Natural killer cell (primary cell): ENCODE measurements at regions of chr3 and their contacts with region 1.

Region 1: DNA sequence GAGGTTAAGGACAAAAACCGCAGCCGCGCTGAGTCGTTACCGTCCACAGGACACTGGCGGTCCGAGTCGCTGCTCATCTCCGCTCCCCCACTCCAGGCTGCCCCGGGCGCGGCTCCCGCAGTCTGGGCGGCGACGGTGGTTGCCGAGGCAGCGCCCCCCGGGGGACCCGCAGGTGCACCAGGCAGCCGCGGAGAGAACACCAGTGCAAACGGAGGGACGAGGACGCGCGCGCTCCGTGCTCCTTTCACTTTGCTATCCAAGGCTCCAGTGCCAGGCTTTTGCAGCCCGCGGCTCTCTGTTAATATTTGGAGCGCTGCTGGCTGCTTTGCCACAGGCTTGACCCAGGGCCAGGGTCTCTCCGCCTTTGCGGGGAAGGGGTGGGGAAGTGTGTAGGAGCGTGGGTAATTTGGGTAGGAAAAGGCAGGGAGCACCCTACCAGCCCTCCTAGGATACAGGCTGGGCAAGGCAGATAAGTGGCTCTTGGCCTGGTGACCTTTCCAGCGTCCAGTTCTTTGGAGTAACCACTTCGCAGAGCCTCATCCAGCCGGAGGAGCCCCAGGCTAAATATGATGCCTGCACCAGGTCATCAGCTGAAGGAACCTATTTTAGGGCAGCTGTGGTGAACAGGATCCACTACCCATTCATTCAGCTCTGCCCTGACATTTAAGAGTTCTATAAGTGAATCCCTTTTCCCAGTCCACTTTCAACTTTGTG is at the start of gene GADL1:
- DNase-seq: peak in 1 of 2 donors; percentile 6
- ATAC-seq: peak in 1 of 3 donors; percentile 58
- H3K4me3 ChIP-seq: no peak within 1 kb of the TSS
- H3K4me3 Mint-ChIP-seq: peak within 1 kb of the TSS; percentile 75
- H3K27ac ChIP-seq: no peak within 1 kb of the TSS
- H3K27ac Mint-ChIP-seq: no peak within 1 kb of the TSS
- H3K4me1 ChIP-seq: peaks cover 2% of the 10 kb centered on the region
- H3K4me1 Mint-ChIP-seq: peaks cover 9 to 15% of the 10 kb centered on the region in 2 donors
- H3K27me3 ChIP-seq: peaks cover 11% of the 10 kb centered on the region
- H3K27me3 Mint-ChIP-seq: peaks cover 25 to 34% of the 10 kb centered on the region in 2 donors
- CTCF ChIP-seq: no peak
- total RNA-seq, gene GADL1: not detected

Region 2: DNA sequence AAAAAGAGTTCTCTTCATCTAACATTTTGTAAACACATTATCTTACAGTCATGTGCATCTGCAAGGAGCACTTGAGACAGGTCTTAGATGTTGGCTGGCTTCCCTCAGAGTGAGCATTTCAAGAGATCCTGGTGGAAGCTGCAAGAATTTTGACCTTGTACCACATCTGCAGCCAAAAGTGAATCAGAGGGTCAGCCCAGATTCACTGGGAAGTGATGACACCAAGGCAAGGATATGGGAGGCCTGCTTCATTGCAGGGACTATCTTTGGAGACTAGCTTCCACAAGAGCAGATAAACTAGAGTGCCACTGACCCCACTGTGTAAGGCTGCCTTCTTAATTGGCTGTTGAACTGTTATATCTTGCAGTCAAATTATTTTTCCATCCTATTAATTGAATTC is 21.1 kb after region 1 on chr3:
- intact Hi-C with region 1: loop called (anchors 2 kb)
- DNase-seq: no peak
- ATAC-seq: no peak
- H3K4me3 ChIP-seq: no peak overlapping the region
- H3K4me3 Mint-ChIP-seq: no peak overlapping the region
- H3K27ac ChIP-seq: no peak overlapping the region
- H3K27ac Mint-ChIP-seq: no peak overlapping the region
- H3K4me1 ChIP-seq: no peaks in the 10 kb centered on the region
- H3K4me1 Mint-ChIP-seq: peaks cover 0 to 11% of the 10 kb centered on the region in 2 donors
- H3K27me3 ChIP-seq: no peaks in the 10 kb centered on the region
- H3K27me3 Mint-ChIP-seq: no peaks in the 10 kb centered on the region
- CTCF ChIP-seq: no peak